CD14-positive monocyte (primary cell): ENCODE measurements at regions of chr13 and their contacts with region 1.

Region 1: DNA sequence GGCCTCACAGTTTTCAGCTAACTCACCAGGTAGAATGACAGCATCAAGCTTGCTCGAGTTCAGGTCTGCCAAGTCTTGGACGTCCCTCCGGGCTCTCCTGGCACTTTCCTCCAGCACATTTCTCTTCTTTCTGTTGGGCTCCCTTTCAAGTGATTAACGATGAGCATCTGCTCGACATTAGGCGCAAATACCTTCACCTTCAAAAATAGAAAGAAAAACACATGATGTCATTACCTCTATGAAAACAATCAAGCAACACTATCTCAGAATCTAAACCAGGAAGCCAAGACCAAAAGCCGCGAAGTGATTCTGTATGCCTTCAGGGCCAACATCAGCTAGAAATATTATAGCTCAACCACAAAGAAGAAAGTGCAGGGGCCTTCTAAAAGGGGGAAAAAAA is 15.4 kb upstream of the CLN5 start:
- DNase-seq: no peak
- H3K4me3 ChIP-seq: no peak overlapping the region
- H3K4me3 Mint-ChIP-seq: peak overlapping the region in 1 of 2 donors; percentile 56
- H3K27ac ChIP-seq: no peak overlapping the region
- H3K27ac Mint-ChIP-seq: peak overlapping the region in 1 of 7 donors; percentile 0
- H3K4me1 ChIP-seq: peaks cover 5 to 6% of the 10 kb centered on the region in 2 donors
- H3K4me1 Mint-ChIP-seq: peaks cover 14% of the 10 kb centered on the region
- H3K27me3 ChIP-seq: peaks cover 5 to 9% of the 10 kb centered on the region in 2 donors
- H3K27me3 Mint-ChIP-seq: peaks cover 20 to 36% (median 24%) of the 10 kb centered on the region in 3 donors
- CTCF ChIP-seq: no peak

Region 2: GRCh38 chr13:76937281-76937820 is 39.1 kb before region 1 on chr13:
- intact Hi-C with region 1: loop called in 1 of 2 experiments (anchors 5 kb)
- DNase-seq: peak; percentile 78 to 96 (median 89)
- H3K4me3 ChIP-seq: no peak overlapping the region
- H3K4me3 Mint-ChIP-seq: no peak overlapping the region
- H3K27ac ChIP-seq: peak overlapping the region; percentile 45 to 62
- H3K27ac Mint-ChIP-seq: peak overlapping the region; percentile 41 to 94 (median 83)
- H3K4me1 ChIP-seq: peaks cover 35 to 41% of the 10 kb centered on the region in 2 donors
- H3K4me1 Mint-ChIP-seq: peaks cover 39% of the 10 kb centered on the region
- H3K27me3 ChIP-seq: no peaks in the 10 kb centered on the region
- H3K27me3 Mint-ChIP-seq: peaks cover 1 to 4% (median 2%) of the 10 kb centered on the region in 3 donors
- CTCF ChIP-seq: no peak